Lower leg skin (tissue), 4 donors: ENCODE measurements at regions of chrX and their contacts with region 1.

Region 1: GRCh38 chrX:74614093-74614909 is at the start of gene RLIM:
- DNase-seq: peak; percentile 92 to 98
- H3K4me3 ChIP-seq: peak within 1 kb of the TSS; percentile 60
- CTCF ChIP-seq: no peak
- POLR2A ChIP-seq: peak in 1 of 2 donors; percentile 26
- total RNA-seq, gene RLIM: 18.4 to 25.9 (median 22.3) TPM

Region 2: GRCh38 chrX:74656079-74656745 is 41.9 kb after region 1 on chrX:
- intact Hi-C with region 1: loop called (anchors 1 kb)
- DNase-seq: no peak
- H3K4me3 ChIP-seq: no peak overlapping the region
- CTCF ChIP-seq: no peak
- POLR2A ChIP-seq: no peak